ENCODE measurements at regions of chr4 and their contacts with region 1.

Region 1: DNA sequence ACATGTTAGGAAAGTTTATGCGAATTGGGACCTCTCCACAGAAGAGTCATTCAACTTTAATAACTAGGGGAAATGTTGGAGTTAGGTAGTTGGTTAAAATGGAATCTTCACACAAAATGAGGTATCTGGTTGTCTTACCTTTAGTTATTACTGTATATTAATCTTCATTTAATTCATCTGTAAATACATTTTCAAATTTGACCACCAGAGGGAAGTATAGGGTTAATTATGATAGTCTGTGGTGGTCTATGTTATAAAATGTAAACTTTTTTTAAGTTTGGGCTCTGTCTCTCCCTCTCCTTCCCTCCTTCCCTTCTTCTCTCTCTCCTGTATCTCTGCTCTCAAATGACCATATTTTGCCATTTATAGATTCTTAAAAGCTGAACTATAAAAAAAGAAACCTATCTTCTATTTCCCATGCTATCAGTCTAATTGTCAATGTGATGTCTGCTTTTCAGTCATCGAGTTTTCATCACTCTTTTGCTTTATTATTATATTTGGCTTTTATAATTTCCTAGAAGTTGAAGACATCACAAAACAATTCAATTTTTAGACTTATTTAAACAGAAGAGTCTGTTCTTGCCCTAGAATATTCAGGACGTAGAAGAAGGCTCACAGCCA is 49.8 kb downstream of the TMEM144 start:
- DNase-seq: no peak
- CTCF ChIP-seq: peak; percentile 42

Region 2: GRCh38 chr4:158610790-158611189 is 350.7 kb after region 1 on chr4:
- in situ Hi-C with region 1: loop called (anchors 10 kb)
- DNase-seq: peak; percentile 9
- CTCF ChIP-seq: no peak